ENCODE measurements at regions of chr10 and their contacts with region 1.

Region 1: DNA sequence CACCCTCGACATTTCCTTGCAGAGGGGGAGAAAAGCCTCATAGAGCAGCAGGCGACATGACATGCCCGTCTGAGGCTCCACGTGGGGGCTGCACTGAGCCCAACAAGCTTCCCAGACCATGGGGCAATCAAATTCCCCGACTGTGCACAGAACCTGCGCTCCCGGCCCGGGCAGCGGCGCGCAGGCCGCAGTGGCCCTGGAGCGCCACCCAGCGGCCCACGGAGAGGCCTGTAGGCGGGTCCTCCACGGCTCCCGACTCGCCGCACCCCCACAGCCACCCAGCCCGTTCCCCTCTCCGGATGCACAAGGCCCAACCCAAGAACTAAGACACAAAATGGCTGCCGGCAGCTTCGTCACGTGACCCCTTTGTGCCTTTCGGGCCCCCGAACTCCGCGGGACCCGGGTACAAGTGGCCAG is 816 bp downstream of the EPC1 start:
- DNase-seq: peak; percentile 95 to 97
- ATAC-seq: peak; percentile 84 to 85
- H3K4me3 ChIP-seq: peak overlapping the region; percentile 78 to 98 (median 89)
- H3K27ac ChIP-seq: peak overlapping the region; percentile 96 to 100 (median 100)
- H3K4me1 ChIP-seq: peaks cover 64 to 66% of the 10 kb centered on the region in 2 donors
- H3K27me3 ChIP-seq: no peaks in the 10 kb centered on the region
- CTCF ChIP-seq: peak; percentile 97 to 99 (median 99)
- POLR2A ChIP-seq: peak in 1 of 2 donors; percentile 42

Region 2: GRCh38 chr10:31262672-31263071 is 1083.5 kb before region 1 on chr10:
- in situ Hi-C with region 1: no loop called
- intact Hi-C with region 1: no loop called
- DNase-seq: no peak
- ATAC-seq: peak; percentile 46 to 62
- H3K4me3 ChIP-seq: peak overlapping the region in 1 of 4 donors; percentile 2
- H3K27ac ChIP-seq: peak overlapping the region in 3 of 4 donors; percentile 1 to 48 (median 37)
- H3K4me1 ChIP-seq: peaks cover 16 to 24% of the 10 kb centered on the region in 2 donors
- H3K27me3 ChIP-seq: no peaks in the 10 kb centered on the region
- CTCF ChIP-seq: no peak
- POLR2A ChIP-seq: no peak

Region 3: DNA sequence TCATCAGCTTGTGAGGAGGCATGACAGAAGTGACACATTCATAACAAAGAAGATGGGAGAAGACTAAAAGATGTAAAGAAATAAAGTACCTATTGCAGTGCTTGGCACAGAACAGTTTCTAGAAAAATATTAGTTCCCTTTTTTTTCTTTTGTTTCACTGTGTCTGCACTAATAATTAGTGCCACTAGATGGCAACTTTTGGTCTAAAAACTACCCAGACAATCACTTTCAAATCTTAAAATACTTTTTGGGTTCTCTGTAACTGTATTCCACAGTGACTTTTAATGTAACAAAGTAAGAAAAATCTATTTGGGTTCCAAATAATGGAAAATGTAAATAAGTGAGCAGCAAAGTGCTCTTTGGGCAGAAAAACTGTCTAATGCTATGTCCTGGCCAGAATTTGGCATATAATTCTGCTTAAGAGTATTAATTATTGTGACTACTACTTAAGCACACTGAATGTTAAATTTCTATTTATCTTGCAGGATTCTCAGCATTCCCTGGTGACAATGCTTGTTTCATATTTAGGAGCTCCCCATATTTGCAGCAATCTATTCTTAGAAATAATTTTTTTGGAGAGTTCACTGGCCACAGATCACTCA is 155.2 kb before region 1 on chr10:
- in situ Hi-C with region 1: no loop called
- intact Hi-C with region 1: loop called (anchors 5 kb)
- DNase-seq: no peak
- ATAC-seq: peak in 1 of 2 donors; percentile 41
- H3K4me3 ChIP-seq: no peak overlapping the region
- H3K27ac ChIP-seq: no peak overlapping the region
- H3K4me1 ChIP-seq: no peaks in the 10 kb centered on the region
- H3K27me3 ChIP-seq: no peaks in the 10 kb centered on the region
- CTCF ChIP-seq: peak; percentile 50 to 82 (median 73)
- POLR2A ChIP-seq: no peak

Region 4: GRCh38 chr10:32256613-32257437 is 89.3 kb before region 1 on chr10:
- in situ Hi-C with region 1: loop called in 2 of 4 experiments (anchors 5 to 10 kb)
- intact Hi-C with region 1: loop called (anchors 1 kb)
- DNase-seq: peak; percentile 23 to 33
- ATAC-seq: peak; percentile 66 to 77
- H3K4me3 ChIP-seq: no peak overlapping the region
- H3K27ac ChIP-seq: no peak overlapping the region
- H3K4me1 ChIP-seq: no peaks in the 10 kb centered on the region
- H3K27me3 ChIP-seq: no peaks in the 10 kb centered on the region
- CTCF ChIP-seq: peak; percentile 77 to 88 (median 84)
- POLR2A ChIP-seq: no peak

Region 5: DNA sequence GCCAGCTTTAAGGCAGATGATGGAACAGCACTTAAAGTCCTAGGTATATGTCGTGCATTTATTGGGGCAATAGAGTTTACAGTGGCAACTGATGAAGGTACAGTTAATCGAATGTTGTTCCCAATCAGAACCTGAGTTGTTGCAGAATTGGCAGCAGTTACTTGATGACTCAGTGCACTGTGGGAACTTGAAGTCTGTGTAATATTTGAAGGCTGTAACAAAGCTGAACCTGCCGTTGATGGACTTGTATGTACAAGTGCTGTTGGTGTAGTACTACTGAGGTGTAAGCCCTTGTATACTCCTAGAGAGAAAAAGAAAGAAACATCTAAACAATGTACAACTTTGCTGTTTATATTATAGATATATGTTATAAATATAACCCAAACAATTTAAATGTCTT is 74.5 kb before region 1 on chr10:
- in situ Hi-C with region 1: no loop called
- intact Hi-C with region 1: loop called (anchors 5 kb)
- DNase-seq: no peak
- ATAC-seq: peak in 1 of 2 donors; percentile 36
- H3K4me3 ChIP-seq: no peak overlapping the region
- H3K27ac ChIP-seq: no peak overlapping the region
- H3K4me1 ChIP-seq: no peaks in the 10 kb centered on the region
- H3K27me3 ChIP-seq: no peaks in the 10 kb centered on the region
- CTCF ChIP-seq: no peak
- POLR2A ChIP-seq: no peak

Region 6: GRCh38 chr10:32367793-32368453 is 21.8 kb after region 1 on chr10:
- in situ Hi-C with region 1: no loop called
- intact Hi-C with region 1: loop called (anchors 1 kb)
- DNase-seq: peak; percentile 41 to 56
- ATAC-seq: peak; percentile 69 to 71
- H3K4me3 ChIP-seq: peak overlapping the region; percentile 23 to 40 (median 26)
- H3K27ac ChIP-seq: peak overlapping the region; percentile 43 to 88 (median 51)
- H3K4me1 ChIP-seq: peaks cover 34 to 41% of the 10 kb centered on the region in 2 donors
- H3K27me3 ChIP-seq: no peaks in the 10 kb centered on the region
- CTCF ChIP-seq: peak; percentile 76 to 82 (median 81)
- POLR2A ChIP-seq: no peak

Region 7: GRCh38 chr10:32445740-32446535 is 99.8 kb after region 1 on chr10 and contains the start of gene CCDC7:
- in situ Hi-C with region 1: no loop called
- intact Hi-C with region 1: loop called (anchors 1 kb)
- DNase-seq: peak; percentile 57 to 76
- ATAC-seq: peak; percentile 93 to 95
- H3K4me3 ChIP-seq: peak within 1 kb of the TSS; percentile 67 to 99 (median 80)
- H3K27ac ChIP-seq: peak within 1 kb of the TSS; percentile 84 to 99 (median 90)
- H3K4me1 ChIP-seq: peaks cover 9 to 11% of the 10 kb centered on the region in 2 donors
- H3K27me3 ChIP-seq: no peaks in the 10 kb centered on the region
- CTCF ChIP-seq: peak; percentile 31 to 64 (median 38)
- POLR2A ChIP-seq: peak; percentile 54 to 67
- total RNA-seq, gene CCDC7: 4.6 to 12.9 (median 5.9) TPM

Measured in gastrocnemius medialis (tissue), 4 donors.